ENCODE measurements at regions of chr20 and their contacts with region 1.

Region 1: GRCh38 chr20:4656491-4656890 is 65.2 kb upstream of the PRND start:
- DNase-seq: peak; percentile 97
- H3K4me3 ChIP-seq: no peak overlapping the region
- H3K27ac ChIP-seq: peak overlapping the region; percentile 72
- H3K4me1 ChIP-seq: peaks cover 10% of the 10 kb centered on the region
- H3K27me3 ChIP-seq: peaks cover 16 to 19% of the 10 kb centered on the region in 2 experiments
- CTCF ChIP-seq: no peak
- POLR2A ChIP-seq: no peak

Region 2: DNA sequence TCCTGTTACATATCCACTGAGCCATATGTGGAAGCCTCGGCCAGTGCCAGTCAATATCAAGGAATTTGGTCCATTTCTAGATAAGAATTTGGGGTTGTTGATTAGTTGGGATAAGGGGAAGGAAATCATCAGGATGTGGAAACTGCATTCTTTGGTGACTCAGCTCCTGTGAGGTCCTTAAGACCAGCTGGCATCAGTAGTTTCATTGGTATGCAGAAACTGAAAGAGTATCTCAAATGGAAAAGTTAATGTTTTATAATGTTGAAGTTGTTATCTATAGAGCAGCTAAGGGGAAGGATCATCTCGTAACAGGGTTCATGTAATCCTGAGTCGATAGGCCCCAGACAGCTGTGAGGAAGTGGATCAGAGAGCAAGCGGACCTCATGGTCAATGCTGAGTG is 22.7 kb before region 1 on chr20:
- CTCF ChIA-PET with region 1: interaction called, 6 read pairs
- POLR2A ChIA-PET with region 1: no interaction called
- dilution Hi-C with region 1: no loop called
- intact Hi-C with region 1: loop called (anchors 1 kb)
- DNase-seq: peak; percentile 88
- H3K4me3 ChIP-seq: no peak overlapping the region
- H3K27ac ChIP-seq: peak overlapping the region; percentile 80
- H3K4me1 ChIP-seq: peaks cover 16% of the 10 kb centered on the region
- H3K27me3 ChIP-seq: peaks cover 0 to 2% of the 10 kb centered on the region in 2 experiments
- CTCF ChIP-seq: no peak
- POLR2A ChIP-seq: no peak

Region 3: GRCh38 chr20:4717816-4718570 is 61.5 kb after region 1 on chr20:
- CTCF ChIA-PET with region 1: no interaction called
- POLR2A ChIA-PET with region 1: no interaction called
- dilution Hi-C with region 1: no loop called
- intact Hi-C with region 1: no loop called
- DNase-seq: no peak
- H3K4me3 ChIP-seq: no peak overlapping the region
- H3K27ac ChIP-seq: no peak overlapping the region
- H3K4me1 ChIP-seq: no peaks in the 10 kb centered on the region
- H3K27me3 ChIP-seq: peaks cover 11 to 19% of the 10 kb centered on the region in 2 experiments
- CTCF ChIP-seq: no peak
- POLR2A ChIP-seq: no peak

Region 4: GRCh38 chr20:5215672-5216304 is 559.3 kb after region 1 on chr20:
- CTCF ChIA-PET with region 1: no interaction called
- POLR2A ChIA-PET with region 1: no interaction called
- dilution Hi-C with region 1: no loop called
- intact Hi-C with region 1: no loop called
- DNase-seq: peak; percentile 84
- H3K4me3 ChIP-seq: no peak overlapping the region
- H3K27ac ChIP-seq: peak overlapping the region; percentile 14
- H3K4me1 ChIP-seq: peaks cover 13% of the 10 kb centered on the region
- H3K27me3 ChIP-seq: no peaks in the 10 kb centered on the region
- CTCF ChIP-seq: no peak
- POLR2A ChIP-seq: no peak

Measured in endothelial cell of umbilical vein (primary cell).